CD4-positive, alpha-beta memory T cell (primary cell): ENCODE measurements at regions of chr4 and their contacts with region 1.

Region 1: GRCh38 chr4:2262143-2262943 is 434 bp upstream of the MXD4 start:
- DNase-seq: peak; percentile 98 to 99 (median 99)
- H3K4me3 ChIP-seq: peak overlapping the region in 1 of 2 donors; percentile 70
- H3K4me3 Mint-ChIP-seq: peak overlapping the region; percentile 65 to 93 (median 82)
- H3K27ac ChIP-seq: peak overlapping the region; percentile 89
- H3K27ac Mint-ChIP-seq: peak overlapping the region; percentile 59 to 92 (median 88)
- H3K4me1 ChIP-seq: peaks cover 46% of the 10 kb centered on the region
- H3K4me1 Mint-ChIP-seq: peaks cover 2 to 24% (median 5%) of the 10 kb centered on the region in 4 donors
- H3K27me3 ChIP-seq: no peaks in the 10 kb centered on the region
- H3K27me3 Mint-ChIP-seq: no peaks in the 10 kb centered on the region

Region 2: DNA sequence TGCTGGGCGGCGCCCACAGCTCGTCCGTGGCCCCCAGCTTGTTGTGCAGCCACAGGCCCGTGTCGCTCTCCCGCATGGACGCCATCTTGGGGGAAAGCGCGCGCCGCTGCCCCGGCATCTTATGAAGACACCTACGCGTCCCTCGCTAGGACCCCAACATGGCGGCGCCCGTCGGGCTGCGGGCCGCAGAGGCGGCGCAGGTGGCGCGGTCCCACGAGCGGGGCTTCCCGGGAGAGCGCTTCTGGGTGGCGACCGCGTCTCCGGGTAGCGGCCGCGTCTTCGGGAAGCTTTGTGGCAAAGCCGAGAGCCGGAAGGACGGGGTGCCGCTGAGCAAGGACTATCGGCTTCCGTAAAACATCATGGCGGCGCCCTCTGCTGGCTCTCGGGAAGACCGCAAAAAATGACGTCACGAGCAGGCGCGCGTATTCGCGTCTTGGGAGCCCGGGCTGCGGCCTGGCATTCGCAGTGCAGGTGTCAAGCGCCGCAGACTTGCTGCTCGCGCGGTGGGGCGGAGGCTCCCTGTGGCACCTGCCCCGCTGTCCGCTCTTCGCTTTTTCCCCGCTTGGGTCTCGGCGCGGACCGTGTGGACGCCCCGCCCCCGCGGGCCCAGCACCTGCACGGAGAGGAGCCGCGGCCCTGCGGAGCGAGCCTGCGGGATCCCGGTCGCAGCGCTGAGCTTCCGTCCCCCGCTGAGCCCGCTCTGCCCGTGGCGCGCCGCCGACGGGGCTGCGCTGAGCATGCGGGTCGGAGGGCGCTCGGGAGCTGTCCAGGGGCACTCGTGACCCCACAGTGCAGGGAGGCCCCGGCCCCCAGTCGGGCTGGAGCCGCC is 253.3 kb before region 1 on chr4 and contains the start of gene NELFA:
- CTCF ChIA-PET with region 1: no interaction called
- POLR2A ChIA-PET with region 1: no interaction called
- intact Hi-C with region 1: loop called (anchors 2 kb)
- DNase-seq: peak; percentile 95 to 97 (median 97)
- H3K4me3 ChIP-seq: peak within 1 kb of the TSS; percentile 76 to 94
- H3K4me3 Mint-ChIP-seq: peak within 1 kb of the TSS; percentile 92 to 96 (median 94)
- H3K27ac ChIP-seq: peak within 1 kb of the TSS; percentile 95
- H3K27ac Mint-ChIP-seq: peak within 1 kb of the TSS; percentile 94 to 98 (median 97)
- H3K4me1 ChIP-seq: peaks cover 27% of the 10 kb centered on the region
- H3K4me1 Mint-ChIP-seq: peaks cover 29 to 42% (median 31%) of the 10 kb centered on the region in 4 donors
- H3K27me3 ChIP-seq: no peaks in the 10 kb centered on the region
- H3K27me3 Mint-ChIP-seq: no peaks in the 10 kb centered on the region
- total RNA-seq, gene NELFA: 47.0 to 48.3 TPM

Region 3: DNA sequence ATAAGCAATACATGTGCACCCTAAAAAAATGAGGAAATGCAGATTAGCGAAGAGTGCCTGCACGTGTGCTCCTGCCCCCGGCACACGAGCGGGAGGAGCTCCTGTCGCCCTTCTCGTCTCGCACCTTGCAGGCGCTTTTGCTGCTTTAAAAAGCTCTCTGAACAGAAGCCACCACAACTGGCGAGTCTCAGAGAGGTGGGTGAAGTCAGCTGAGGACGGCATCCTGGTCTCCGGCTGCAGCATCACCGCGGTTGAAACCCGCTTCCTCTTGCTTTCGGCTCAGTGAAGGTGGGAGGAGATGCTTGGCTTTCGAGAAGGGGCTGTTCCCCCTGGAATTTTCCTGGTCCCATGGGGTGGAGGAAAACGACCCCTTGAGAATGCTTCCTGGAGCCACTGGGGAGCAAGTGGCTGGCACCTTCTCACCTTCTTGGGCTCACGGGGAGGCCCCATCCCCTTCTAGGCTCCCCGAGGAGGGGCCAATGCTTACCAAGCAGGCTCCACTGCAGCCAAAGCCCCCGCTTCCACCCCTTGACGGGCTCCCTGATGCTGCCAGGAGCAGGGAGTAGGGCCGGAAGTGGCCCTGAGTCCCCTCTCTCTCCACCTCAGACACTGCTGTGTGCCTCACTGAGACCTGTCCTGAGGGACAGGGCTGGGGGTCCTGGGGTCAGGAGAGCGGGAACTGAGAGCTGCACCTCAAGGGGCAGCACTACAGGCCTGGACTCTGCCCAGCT is 28.8 kb after region 1 on chr4:
- CTCF ChIA-PET with region 1: interaction called, 4 read pairs
- POLR2A ChIA-PET with region 1: interaction called, 51 read pairs
- intact Hi-C with region 1: loop called (anchors 2 kb)
- DNase-seq: peak; percentile 81 to 92 (median 84)
- H3K4me3 ChIP-seq: no peak overlapping the region
- H3K4me3 Mint-ChIP-seq: peak overlapping the region in 7 of 8 donors; percentile 77 to 91 (median 81)
- H3K27ac ChIP-seq: peak overlapping the region; percentile 71
- H3K27ac Mint-ChIP-seq: peak overlapping the region; percentile 96 to 99 (median 98)
- H3K4me1 ChIP-seq: peaks cover 41% of the 10 kb centered on the region
- H3K4me1 Mint-ChIP-seq: peaks cover 16 to 52% (median 34%) of the 10 kb centered on the region in 4 donors
- H3K27me3 ChIP-seq: no peaks in the 10 kb centered on the region
- H3K27me3 Mint-ChIP-seq: no peaks in the 10 kb centered on the region

Region 4: GRCh38 chr4:2418650-2419571 is 156.6 kb after region 1 on chr4 and contains the start of gene CFAP99:
- CTCF ChIA-PET with region 1: interaction called, 9 read pairs
- POLR2A ChIA-PET with region 1: interaction called, 63 read pairs
- intact Hi-C with region 1: loop called (anchors 1 kb)
- DNase-seq: peak; percentile 96 to 99 (median 97)
- H3K4me3 ChIP-seq: peak within 1 kb of the TSS; percentile 44 to 72
- H3K4me3 Mint-ChIP-seq: peak within 1 kb of the TSS; percentile 89 to 95 (median 92)
- H3K27ac ChIP-seq: peak within 1 kb of the TSS; percentile 78
- H3K27ac Mint-ChIP-seq: peak within 1 kb of the TSS; percentile 92 to 100 (median 98)
- H3K4me1 ChIP-seq: peaks cover 39% of the 10 kb centered on the region
- H3K4me1 Mint-ChIP-seq: peaks cover 29 to 48% (median 36%) of the 10 kb centered on the region in 4 donors
- H3K27me3 ChIP-seq: no peaks in the 10 kb centered on the region
- H3K27me3 Mint-ChIP-seq: no peaks in the 10 kb centered on the region
- total RNA-seq, gene CFAP99: 0.12 to 0.19 TPM

Region 5: DNA sequence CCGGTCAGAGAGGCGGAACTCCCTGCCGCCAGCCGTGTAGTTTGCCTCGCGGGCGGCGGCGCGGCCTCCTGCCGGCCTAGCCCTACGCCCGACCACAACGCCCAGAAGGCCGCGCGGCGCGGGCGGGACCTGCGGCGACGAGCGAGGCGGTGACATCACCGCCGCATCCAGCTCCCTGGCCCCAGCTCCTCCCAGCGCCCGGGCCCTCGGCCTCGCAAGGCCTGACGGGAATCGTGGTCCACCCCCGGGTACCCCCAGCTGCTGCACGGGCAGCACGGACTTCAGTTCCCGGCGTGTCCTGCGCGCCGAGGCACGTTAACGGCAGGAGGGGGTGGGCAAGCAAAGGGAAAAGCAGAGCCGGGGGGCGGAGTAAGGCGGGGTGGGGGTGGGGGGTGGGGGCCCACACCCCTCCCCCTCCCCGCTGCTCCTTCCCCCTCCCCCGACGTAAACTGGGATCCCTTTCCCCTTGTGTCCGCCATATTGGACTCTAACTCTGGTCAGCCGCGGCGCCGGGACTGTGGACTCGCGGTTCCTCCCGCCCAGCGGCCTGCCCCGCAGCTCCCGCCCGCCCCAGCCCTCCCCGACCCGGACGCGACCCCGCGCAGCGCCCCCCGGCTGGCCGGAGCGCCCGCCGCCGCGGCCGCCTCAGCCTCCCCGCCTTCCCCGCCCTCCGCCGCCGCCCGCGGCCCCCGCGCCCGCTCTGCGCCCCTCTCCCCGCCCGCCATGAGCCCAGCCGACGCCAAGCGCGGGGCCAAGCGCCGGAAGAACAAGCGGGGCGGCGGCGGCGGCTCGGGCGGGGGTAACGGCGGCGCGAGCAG is 274.1 kb after region 1 on chr4 and contains the start of gene FAM193A:
- CTCF ChIA-PET with region 1: no interaction called
- POLR2A ChIA-PET with region 1: interaction called, 7 read pairs
- intact Hi-C with region 1: loop called (anchors 1 kb)
- DNase-seq: peak; percentile 98 to 99 (median 99)
- H3K4me3 ChIP-seq: peak within 1 kb of the TSS; percentile 52 to 70
- H3K4me3 Mint-ChIP-seq: peak within 1 kb of the TSS; percentile 88 to 95 (median 92)
- H3K27ac ChIP-seq: peak within 1 kb of the TSS; percentile 83
- H3K27ac Mint-ChIP-seq: peak within 1 kb of the TSS; percentile 92 to 97 (median 94)
- H3K4me1 ChIP-seq: peaks cover 37% of the 10 kb centered on the region
- H3K4me1 Mint-ChIP-seq: peaks cover 10 to 44% (median 16%) of the 10 kb centered on the region in 4 donors
- H3K27me3 ChIP-seq: no peaks in the 10 kb centered on the region
- H3K27me3 Mint-ChIP-seq: no peaks in the 10 kb centered on the region
- total RNA-seq, gene FAM193A: 47.8 TPM